AG04450 (cell line): ENCODE measurements at regions of chr7 and their contacts with region 1.

Region 1: DNA sequence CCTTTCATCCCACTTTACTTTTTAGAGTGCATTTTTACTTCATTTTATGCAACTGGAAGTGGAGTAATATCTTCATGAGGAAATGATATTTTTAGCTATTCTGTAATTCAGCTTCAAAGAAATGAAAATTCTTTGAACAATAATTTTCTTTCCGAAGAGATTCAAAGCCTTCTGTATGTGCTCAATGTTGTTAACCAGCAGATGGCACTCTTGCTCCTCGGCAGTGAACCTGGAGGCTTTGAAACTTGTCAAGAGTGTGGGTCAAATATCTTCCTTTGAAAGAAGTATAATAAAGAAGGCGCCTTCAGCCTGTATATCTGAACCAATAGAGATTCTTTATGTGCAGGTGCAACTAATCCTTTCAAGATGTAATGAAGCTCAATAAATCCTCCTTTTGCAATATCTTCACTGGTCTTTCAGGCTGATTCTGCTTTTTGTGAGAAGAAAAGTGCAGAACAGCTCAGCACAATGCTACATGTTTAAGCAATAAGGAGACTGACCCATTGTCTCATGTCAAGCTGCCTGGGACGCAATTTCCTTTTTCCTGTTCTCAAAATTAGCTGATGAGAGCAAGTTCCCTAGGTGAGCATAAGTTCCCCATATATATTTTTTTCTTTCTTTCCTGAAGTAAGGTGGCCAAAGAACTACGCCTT is 258.4 kb downstream of the SEMA3A start:
- DNase-seq: peak; percentile 53
- H3K4me3 ChIP-seq: no peak overlapping the region
- H3K27ac ChIP-seq: no peak overlapping the region
- H3K27me3 ChIP-seq: no peaks in the 10 kb centered on the region
- CTCF ChIP-seq: peak; percentile 98

Region 2: GRCh38 chr7:83819911-83820310 is 116.3 kb before region 1 on chr7:
- CTCF ChIA-PET with region 1: no interaction called
- POLR2A ChIA-PET with region 1: no interaction called
- DNase-seq: no peak
- H3K4me3 ChIP-seq: no peak overlapping the region
- H3K27ac ChIP-seq: no peak overlapping the region
- H3K27me3 ChIP-seq: no peaks in the 10 kb centered on the region
- CTCF ChIP-seq: no peak

Region 3: GRCh38 chr7:83835424-83835823 is 100.8 kb before region 1 on chr7:
- CTCF ChIA-PET with region 1: no interaction called
- POLR2A ChIA-PET with region 1: no interaction called
- DNase-seq: no peak
- H3K4me3 ChIP-seq: no peak overlapping the region
- H3K27ac ChIP-seq: no peak overlapping the region
- H3K27me3 ChIP-seq: no peaks in the 10 kb centered on the region
- CTCF ChIP-seq: no peak

Region 4: DNA sequence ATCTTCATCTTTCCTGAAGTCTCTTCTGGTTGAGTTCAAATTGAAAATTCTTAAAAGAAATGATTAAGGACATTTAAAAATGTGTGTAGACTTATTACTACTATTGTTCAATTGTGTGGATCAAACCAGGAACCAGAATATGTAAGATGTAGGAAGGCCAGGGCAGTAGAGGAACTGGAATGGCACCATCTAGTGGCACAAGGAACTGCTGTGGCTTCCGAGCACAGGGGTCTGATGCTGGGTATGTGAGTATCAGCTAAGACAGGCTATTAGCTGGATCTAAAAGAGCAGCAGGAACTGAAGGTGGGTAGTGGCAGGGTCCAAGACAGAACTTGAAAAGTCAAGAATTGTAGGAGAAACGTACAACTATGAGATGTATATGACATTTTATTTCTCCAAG is 11.1 kb after region 1 on chr7:
- CTCF ChIA-PET with region 1: interaction called, 63 read pairs
- POLR2A ChIA-PET with region 1: no interaction called
- DNase-seq: no peak
- H3K4me3 ChIP-seq: no peak overlapping the region
- H3K27ac ChIP-seq: no peak overlapping the region
- H3K27me3 ChIP-seq: no peaks in the 10 kb centered on the region
- CTCF ChIP-seq: peak; percentile 37; the same call in 1 of the 2 replicates

Region 5: DNA sequence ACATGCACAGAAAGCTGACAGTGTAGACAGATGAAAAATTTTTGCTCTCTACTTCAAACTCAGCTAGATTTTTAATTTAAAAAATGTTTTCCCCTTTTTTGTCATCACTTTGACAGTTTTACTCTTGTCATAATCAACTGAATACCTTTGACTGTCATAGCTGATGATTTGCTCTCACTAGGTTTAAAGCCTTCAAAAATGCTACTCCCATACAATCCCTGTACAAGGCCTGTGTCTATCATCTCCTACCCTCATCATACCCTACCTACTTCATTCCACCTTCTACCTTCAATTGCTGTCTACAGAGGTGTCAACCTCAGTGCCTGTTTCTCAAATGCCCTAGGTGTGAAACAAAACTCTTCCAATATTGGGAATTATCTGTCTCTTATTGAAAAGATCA is 28.1 kb after region 1 on chr7:
- CTCF ChIA-PET with region 1: interaction called, 23 read pairs
- POLR2A ChIA-PET with region 1: no interaction called
- DNase-seq: no peak
- H3K4me3 ChIP-seq: no peak overlapping the region
- H3K27ac ChIP-seq: no peak overlapping the region
- H3K27me3 ChIP-seq: no peaks in the 10 kb centered on the region
- CTCF ChIP-seq: no peak

Region 6: DNA sequence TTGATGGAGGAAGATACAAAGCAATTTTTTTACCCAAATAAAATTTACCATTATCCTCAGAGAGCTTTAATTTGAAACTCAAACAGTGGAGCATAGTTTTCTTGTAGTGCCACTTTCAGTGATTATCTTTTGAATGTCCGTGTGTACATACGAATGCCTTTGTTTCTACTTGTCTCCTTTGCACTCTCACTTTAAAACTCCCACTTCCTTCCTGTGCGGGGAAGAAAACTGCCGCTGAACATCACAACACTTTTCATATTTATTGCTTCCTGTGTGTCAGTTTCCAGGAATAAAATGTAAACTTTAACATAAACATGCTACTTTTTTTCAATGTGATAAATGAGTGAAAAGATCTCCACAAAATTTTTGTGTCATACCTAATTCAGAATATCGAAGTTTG is 156.0 kb after region 1 on chr7:
- CTCF ChIA-PET with region 1: no interaction called
- POLR2A ChIA-PET with region 1: no interaction called
- DNase-seq: no peak
- H3K4me3 ChIP-seq: no peak overlapping the region
- H3K27ac ChIP-seq: no peak overlapping the region
- H3K27me3 ChIP-seq: no peaks in the 10 kb centered on the region
- CTCF ChIP-seq: no peak

Region 7: GRCh38 chr7:84123965-84124547 is 187.9 kb after region 1 on chr7:
- CTCF ChIA-PET with region 1: no interaction called
- POLR2A ChIA-PET with region 1: no interaction called
- DNase-seq: no peak
- H3K4me3 ChIP-seq: peak overlapping the region; percentile 10
- H3K27ac ChIP-seq: no peak overlapping the region
- H3K27me3 ChIP-seq: no peaks in the 10 kb centered on the region
- CTCF ChIP-seq: no peak

Region 8: DNA sequence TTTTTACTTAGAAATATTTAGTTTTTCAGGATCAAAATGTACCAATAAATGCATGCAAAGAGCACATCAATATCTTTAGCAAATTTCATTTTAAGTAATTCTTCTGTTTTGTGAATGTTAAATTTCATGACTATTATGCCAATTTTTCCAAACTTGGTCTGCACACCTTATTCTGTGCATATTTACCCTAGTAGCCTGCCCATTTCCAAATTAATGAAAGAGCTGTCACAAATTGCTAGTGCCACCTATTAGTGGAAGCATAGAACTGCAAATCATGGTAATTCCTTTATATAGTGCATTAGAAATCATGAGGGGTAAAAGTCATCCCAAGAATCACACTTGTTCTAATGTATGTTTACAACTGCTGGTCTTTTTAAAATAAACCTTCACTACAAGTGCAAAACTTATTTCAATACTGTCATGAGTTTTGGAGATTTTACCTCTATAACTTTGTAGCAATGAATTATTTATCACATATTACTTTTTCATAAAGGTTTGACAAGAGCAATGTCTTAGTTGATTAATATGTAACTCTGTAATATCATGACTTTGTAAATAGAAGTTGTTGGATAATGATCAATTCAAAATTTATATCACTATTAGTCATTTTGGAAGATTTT is 252.7 kb after region 1 on chr7:
- CTCF ChIA-PET with region 1: interaction called, 23 read pairs
- POLR2A ChIA-PET with region 1: no interaction called
- DNase-seq: no peak
- H3K4me3 ChIP-seq: no peak overlapping the region; the same call in 1 of the 2 replicates
- H3K27ac ChIP-seq: no peak overlapping the region
- H3K27me3 ChIP-seq: no peaks in the 10 kb centered on the region
- CTCF ChIP-seq: peak; percentile 51

Region 9: DNA sequence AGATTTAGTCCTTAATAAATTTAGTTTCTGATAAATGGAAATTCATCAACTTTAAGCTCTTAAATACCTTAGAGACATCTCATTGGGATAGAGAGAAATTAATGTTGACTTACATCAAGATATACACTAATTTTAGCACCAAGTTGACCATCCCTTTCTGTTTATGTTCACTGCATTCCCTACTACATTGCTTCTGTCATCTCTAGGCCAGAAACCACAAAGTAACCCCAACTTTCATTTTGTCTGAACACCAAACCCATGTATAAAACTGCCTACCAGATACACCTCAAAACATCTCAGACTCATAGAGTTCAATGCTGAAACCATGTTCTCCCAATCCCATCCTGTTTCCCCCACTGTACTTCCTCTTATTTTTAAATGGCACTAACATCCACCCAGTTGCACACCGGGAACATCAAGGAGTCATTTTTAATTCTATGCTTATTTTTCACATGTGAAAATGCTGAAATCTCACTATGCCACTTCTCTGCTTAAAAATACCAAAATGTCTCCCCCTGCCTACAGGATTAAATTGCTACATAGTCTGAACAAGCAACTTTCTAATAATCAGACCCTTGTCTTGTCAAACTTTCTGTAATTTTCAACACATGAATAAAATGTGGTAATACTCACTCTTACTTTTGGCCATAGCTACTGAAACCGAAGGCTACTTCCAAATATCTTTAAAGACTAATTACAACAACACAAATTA is 1049.0 kb after region 1 on chr7:
- CTCF ChIA-PET with region 1: interaction called, 16 read pairs
- POLR2A ChIA-PET with region 1: no interaction called
- DNase-seq: no peak
- H3K4me3 ChIP-seq: no peak overlapping the region
- H3K27ac ChIP-seq: no peak overlapping the region
- H3K27me3 ChIP-seq: no peaks in the 10 kb centered on the region
- CTCF ChIP-seq: peak; percentile 28; the same call in 1 of the 2 replicates

Region 10: DNA sequence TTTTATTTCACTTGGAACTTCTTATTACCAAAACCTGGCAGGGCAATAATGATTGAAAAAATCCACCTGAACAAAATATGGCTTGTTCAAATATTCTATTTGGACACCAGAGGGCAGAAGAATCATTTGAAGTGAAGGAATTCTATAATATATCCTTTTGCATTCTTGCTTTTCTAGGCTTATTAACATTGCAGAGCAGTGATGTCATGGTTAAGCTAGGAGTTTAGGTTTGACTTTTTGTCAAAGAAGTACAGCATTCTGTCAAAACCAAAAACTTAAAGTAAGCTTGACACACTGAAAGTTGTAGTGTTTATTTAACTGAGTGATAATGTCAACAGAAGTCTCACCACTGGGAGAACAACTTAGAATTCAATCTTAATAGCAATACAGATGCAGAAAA is 1094.7 kb after region 1 on chr7:
- CTCF ChIA-PET with region 1: interaction called, 660 read pairs
- POLR2A ChIA-PET with region 1: no interaction called
- DNase-seq: peak; percentile 44
- H3K4me3 ChIP-seq: no peak overlapping the region
- H3K27ac ChIP-seq: no peak overlapping the region
- H3K27me3 ChIP-seq: no peaks in the 10 kb centered on the region
- CTCF ChIP-seq: peak; percentile 56

Region 11: GRCh38 chr7:85851571-85852193 is 1915.5 kb after region 1 on chr7:
- CTCF ChIA-PET with region 1: interaction called, 12 read pairs
- POLR2A ChIA-PET with region 1: no interaction called
- DNase-seq: peak; percentile 29
- H3K4me3 ChIP-seq: no peak overlapping the region
- H3K27ac ChIP-seq: no peak overlapping the region
- H3K27me3 ChIP-seq: no peaks in the 10 kb centered on the region
- CTCF ChIP-seq: peak; percentile 56